Mammary epithelial cell (primary cell): ENCODE measurements at regions of chr20 and their contacts with region 1.

Region 1: DNA sequence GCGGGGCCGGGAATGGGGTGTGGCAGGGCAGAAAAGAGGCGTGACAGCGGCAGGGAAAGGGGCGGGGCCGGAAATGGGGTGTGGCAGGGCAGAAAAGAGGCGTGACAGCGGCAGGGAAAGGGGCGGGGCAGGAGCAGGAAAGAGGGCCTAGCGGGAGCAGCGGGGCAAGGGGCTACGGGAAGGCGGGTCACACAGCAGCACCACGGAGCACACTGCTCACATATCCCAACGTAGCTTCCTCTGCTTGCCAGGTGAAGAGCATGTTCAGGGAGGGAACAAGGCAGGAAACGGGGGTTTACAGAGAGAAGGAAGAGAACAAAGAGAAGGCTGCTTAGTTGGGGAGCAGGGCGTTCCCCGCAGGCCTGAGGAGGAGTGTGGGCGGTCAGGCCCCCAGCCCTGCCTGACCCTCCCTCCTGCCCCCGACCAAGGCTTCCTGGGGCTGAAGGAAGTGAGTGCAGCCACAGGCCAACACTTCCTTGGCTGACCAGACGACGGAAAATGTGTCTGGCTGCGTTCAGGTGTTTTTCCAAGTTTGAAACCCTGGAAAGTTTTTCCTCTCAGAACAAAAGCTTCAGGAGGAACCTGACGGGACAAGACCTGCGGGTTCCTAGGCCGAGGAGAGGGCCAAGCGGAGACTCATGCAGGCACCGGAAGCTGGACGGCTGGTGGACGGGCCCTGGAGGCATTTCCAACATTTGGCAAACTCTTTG is 13.8 kb downstream of the UCKL1 start:
- DNase-seq: peak; percentile 79
- H3K4me3 ChIP-seq: peak overlapping the region in 2 of 3 experiments; percentile 5 to 29
- H3K27ac ChIP-seq: peak overlapping the region; percentile 69
- H3K4me1 ChIP-seq: peaks cover 32% of the 10 kb centered on the region
- H3K27me3 ChIP-seq: no peaks in the 10 kb centered on the region
- CTCF ChIP-seq: no peak

Region 2: GRCh38 chr20:63594043-63594561 is 348.3 kb before region 1 on chr20:
- CTCF ChIA-PET with region 1: no interaction called
- dilution Hi-C with region 1: loop called (anchors 5 kb)
- in situ Hi-C with region 1: no loop called
- intact Hi-C with region 1: no loop called
- DNase-seq: no peak
- H3K4me3 ChIP-seq: no peak overlapping the region
- H3K27ac ChIP-seq: no peak overlapping the region
- H3K4me1 ChIP-seq: peaks cover 9% of the 10 kb centered on the region
- H3K27me3 ChIP-seq: no peaks in the 10 kb centered on the region
- CTCF ChIP-seq: no peak

Region 3: DNA sequence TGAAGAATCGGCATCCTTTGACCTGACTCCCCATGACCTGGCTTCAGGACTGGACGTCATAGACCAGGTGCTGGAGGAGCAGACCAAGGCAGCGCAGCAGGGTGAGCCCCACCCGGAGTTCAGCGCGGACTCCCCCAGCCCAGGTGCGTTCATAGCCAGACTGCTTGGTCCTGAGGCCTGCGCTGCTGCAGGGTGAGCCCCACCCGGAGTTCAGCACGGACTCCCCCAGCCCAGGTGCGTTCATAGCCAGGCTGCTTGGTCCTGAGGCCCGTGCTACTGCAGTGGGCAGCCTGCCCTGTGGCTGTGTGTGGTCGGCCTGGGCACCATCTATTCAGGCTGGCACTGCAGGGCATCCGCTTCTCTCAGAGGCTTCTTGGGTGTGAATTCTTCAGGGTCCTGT is 268.5 kb before region 1 on chr20:
- CTCF ChIA-PET with region 1: no interaction called
- dilution Hi-C with region 1: no loop called
- in situ Hi-C with region 1: no loop called
- intact Hi-C with region 1: no loop called
- DNase-seq: no peak
- H3K4me3 ChIP-seq: no peak overlapping the region
- H3K27ac ChIP-seq: no peak overlapping the region
- H3K4me1 ChIP-seq: no peaks in the 10 kb centered on the region
- H3K27me3 ChIP-seq: no peaks in the 10 kb centered on the region
- CTCF ChIP-seq: no peak

Region 4: GRCh38 chr20:63698739-63699465 is 243.5 kb before region 1 on chr20:
- CTCF ChIA-PET with region 1: no interaction called
- dilution Hi-C with region 1: loop called (anchors 5 kb)
- in situ Hi-C with region 1: no loop called
- intact Hi-C with region 1: no loop called
- DNase-seq: peak; percentile 94
- H3K4me3 ChIP-seq: peak overlapping the region; percentile 47 to 72 (median 47)
- H3K27ac ChIP-seq: peak overlapping the region; percentile 60
- H3K4me1 ChIP-seq: peaks cover 72% of the 10 kb centered on the region
- H3K27me3 ChIP-seq: no peaks in the 10 kb centered on the region
- CTCF ChIP-seq: no peak

Region 5: GRCh38 chr20:63734111-63734945 is 208.1 kb before region 1 on chr20:
- CTCF ChIA-PET with region 1: no interaction called
- dilution Hi-C with region 1: loop called (anchors 5 kb)
- in situ Hi-C with region 1: no loop called
- intact Hi-C with region 1: no loop called
- DNase-seq: no peak
- H3K4me3 ChIP-seq: no peak overlapping the region
- H3K27ac ChIP-seq: no peak overlapping the region
- H3K4me1 ChIP-seq: peaks cover 21% of the 10 kb centered on the region
- H3K27me3 ChIP-seq: no peaks in the 10 kb centered on the region
- CTCF ChIP-seq: no peak

Region 6: DNA sequence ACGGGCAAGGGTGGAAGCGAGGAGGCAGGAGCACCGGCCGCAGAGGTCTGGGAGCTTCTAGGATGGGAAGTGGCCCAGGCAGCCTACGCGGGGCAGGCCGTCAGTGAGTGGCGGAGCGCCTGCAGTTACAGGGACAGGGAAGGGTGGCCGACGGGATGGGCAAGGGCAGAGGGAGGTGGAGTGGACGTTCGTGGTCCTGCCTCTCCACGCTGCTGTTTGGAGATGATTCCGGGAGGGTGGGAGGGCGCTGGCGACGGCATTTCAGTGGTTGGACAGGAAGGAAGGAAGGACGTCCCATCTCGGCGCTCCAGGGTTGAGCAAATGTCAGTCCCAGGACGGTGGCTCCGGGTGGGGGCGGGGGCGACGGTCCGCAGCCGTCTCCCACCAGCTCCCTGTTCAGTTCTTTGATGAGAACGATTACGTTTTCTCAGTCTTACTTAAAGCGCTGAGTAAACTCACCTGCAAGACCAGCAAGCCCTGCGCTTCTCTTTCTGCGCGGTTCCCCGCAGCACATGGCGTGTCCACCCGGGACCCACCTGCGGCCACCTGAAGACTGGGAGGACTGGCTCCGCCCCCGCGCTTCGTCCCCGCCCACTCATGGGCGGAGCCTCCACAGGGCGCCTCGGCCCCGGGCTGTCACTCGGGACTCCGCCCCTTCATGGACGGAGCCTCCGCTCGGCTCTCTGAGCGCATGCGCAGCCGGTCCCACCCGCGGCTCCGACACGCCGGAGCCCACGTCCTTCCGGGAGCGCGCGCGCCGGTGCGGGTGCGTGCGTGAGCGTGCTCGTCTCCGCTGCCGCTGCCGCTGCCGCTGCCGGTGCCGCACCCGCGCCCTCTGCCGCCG is 47.8 kb before region 1 on chr20 and contains the start of gene DNAJC5:
- CTCF ChIA-PET with region 1: no interaction called
- dilution Hi-C with region 1: loop called (anchors 5 kb)
- in situ Hi-C with region 1: no loop called
- intact Hi-C with region 1: no loop called
- DNase-seq: peak; percentile 87
- H3K4me3 ChIP-seq: peak within 1 kb of the TSS; percentile 65 to 97 (median 85)
- H3K27ac ChIP-seq: peak within 1 kb of the TSS; percentile 73
- H3K4me1 ChIP-seq: peaks cover 25% of the 10 kb centered on the region
- H3K27me3 ChIP-seq: no peaks in the 10 kb centered on the region
- CTCF ChIP-seq: no peak
- total RNA-seq, gene DNAJC5: 77.0 to 78.7 TPM

Region 7: GRCh38 chr20:63930971-63931553 is 11.3 kb before region 1 on chr20:
- CTCF ChIA-PET with region 1: no interaction called
- dilution Hi-C with region 1: no loop called
- in situ Hi-C with region 1: no loop called
- intact Hi-C with region 1: no loop called
- DNase-seq: no peak
- H3K4me3 ChIP-seq: no peak overlapping the region
- H3K27ac ChIP-seq: no peak overlapping the region
- H3K4me1 ChIP-seq: no peaks in the 10 kb centered on the region
- H3K27me3 ChIP-seq: no peaks in the 10 kb centered on the region
- CTCF ChIP-seq: no peak

Region 8: DNA sequence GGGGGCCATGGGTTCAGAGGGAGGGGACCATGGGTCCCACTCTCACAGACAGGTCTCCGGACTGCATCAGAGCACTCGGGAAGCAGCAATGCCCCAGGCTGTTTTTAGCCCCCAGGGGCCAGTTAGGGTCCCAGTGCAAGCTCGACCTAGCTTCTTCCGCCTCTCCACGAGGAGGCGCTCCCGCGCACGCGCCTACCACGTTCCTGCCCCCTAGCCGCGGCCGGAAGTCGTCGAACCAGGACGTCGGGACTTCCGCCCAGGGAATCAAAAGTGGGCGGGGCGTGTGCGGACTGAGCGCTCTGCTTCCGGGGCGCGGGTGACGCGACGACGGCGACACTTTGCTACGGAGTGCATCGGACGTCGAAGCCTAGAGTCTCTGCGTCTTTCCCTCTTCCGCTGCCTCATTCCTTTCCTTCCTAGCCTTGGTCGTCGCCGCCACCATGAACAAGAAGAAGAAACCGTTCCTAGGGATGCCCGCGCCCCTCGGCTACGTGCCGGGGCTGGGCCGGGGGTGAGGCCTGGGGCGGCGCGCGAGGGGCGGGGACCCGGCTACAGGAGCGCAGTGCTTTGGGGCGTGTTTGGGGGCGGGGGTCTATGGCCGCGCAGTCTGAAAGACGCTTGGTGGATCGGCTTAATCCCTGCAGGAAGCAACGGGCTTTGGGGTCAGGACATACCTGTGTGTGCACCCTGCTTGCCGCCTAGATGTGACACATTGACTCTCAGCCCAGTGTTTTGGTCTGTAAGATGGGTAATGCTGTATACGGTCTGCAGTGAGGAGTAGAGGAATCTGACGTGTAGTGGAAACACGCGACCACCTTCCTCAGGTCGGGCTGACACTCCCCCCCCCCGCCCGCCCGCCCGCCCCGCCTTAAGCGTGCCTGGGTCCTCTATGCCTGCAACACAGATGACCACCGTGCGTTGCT is 38.7 kb after region 1 on chr20 and contains the start of gene PRPF6:
- CTCF ChIA-PET with region 1: no interaction called
- dilution Hi-C with region 1: loop called (anchors 5 kb)
- in situ Hi-C with region 1: no loop called
- intact Hi-C with region 1: no loop called
- DNase-seq: peak; percentile 90
- H3K4me3 ChIP-seq: peak within 1 kb of the TSS; percentile 71 to 94 (median 87)
- H3K27ac ChIP-seq: peak within 1 kb of the TSS; percentile 73
- H3K4me1 ChIP-seq: peaks cover 38% of the 10 kb centered on the region
- H3K27me3 ChIP-seq: no peaks in the 10 kb centered on the region
- CTCF ChIP-seq: peak; percentile 53 to 93
- total RNA-seq, gene PRPF6: 33.5 to 56.9 TPM